ENCODE measurements at regions of chr1 and their contacts with region 1.

Region 1: GRCh38 chr1:206734499-206735142 is 36.0 kb upstream of the IL19 start:
- DNase-seq: peak; percentile 73
- CTCF ChIP-seq: peak; percentile 77

Region 2: DNA sequence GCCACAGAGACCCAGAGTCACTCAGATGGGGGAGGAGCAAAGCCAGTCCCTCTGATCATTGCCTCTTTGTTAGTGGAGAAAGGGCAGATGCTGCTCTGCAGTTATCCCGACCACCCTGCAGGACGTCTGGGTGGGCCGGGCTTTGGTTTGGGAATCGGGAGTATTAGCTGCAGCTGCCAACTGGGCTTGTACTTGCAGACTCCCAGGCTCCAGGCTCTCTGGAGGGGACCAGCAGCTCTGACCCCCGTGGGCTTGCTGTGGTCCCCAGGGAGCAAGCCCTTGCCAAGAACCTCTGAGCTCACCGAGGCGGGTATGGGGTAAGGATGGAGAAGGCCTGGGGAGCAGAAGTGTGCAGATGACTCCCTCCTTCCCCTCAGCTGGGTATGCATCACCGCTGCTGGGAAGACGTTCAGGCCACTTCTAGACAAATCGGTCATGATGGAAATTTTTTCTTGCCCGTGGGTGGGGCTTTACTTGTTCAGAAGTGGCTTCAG is 28.3 kb before region 1 on chr1:
- CTCF ChIA-PET with region 1: interaction called, 10 read pairs
- POLR2A ChIA-PET with region 1: no interaction called
- DNase-seq: no peak
- CTCF ChIP-seq: no peak

Region 3: DNA sequence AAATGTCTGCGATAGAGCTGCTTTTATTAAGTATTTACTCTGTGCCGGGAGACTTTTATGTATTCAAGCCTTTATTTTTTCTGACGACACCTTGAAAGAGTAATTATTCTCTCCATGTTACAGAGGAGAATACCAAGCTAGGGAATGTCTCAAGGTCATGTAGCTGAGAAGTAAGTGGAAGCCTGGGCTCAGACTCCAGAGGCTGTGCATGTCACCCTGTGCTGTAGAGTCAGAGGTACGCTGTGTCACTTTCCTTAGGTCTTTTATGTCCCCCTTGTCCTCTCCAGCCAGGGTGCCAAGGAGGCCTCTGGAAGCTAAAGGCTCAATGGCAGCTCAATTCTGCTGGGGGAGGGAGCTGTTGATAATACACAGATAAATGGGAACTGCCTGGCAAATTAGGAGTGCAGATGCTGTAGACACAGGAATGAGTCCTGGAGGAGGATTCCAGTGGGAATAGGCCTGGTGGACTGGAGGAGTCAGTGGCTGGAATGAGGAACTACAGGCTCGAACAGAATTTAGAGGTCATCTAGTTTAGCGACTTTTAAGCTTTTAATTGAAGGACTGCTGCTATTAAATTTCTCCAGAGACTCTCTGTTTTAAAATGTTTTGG is 26.6 kb after region 1 on chr1:
- CTCF ChIA-PET with region 1: interaction called, 32 read pairs
- POLR2A ChIA-PET with region 1: interaction called, 5 read pairs
- DNase-seq: no peak
- CTCF ChIP-seq: no peak

Region 4: DNA sequence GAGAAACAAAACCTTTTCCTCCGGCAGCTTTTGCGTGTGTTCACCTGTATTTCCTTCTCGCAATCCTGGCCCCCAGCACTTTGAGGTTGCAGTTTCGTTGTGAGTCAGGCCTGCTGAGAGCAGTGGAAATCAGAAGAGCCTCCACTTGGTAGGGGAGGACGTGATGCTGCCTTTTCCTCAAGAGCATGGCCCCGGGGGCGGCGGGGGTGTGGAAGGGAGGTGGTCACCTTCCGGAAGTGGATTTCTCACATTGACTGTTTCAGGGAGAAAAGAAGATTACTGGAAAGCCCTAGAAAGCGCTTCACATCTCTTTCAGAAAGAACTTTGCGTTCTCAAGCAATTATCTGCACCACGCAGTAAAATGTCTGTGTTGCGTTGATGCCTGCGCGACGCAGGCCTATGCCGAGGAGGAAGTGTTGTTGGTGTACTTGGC is 49.9 kb after region 1 on chr1:
- CTCF ChIA-PET with region 1: interaction called, 17 read pairs
- POLR2A ChIA-PET with region 1: no interaction called
- DNase-seq: peak; percentile 76
- CTCF ChIP-seq: no peak

Region 5: DNA sequence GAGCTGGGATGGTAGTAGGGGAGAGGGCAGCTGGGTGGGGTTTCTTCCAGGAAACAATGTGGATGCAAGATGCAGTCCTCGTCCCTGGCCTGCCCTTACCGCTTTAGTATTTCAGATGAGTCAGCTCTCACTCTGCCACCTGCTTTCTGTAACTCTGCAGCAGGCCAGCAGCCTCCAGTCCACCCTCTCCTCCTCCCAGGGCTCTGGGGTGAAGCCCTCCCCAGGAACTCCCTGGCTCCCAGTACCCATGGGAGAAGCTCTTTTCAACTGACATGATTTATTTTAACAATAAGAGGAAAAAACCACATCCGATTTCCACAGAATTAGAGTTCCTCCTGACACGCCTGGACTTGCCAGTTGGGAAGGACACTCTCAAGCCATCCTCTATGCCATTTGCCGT is 91.8 kb after region 1 on chr1:
- CTCF ChIA-PET with region 1: interaction called, 11 read pairs
- POLR2A ChIA-PET with region 1: no interaction called
- DNase-seq: no peak
- CTCF ChIP-seq: no peak

Region 6: GRCh38 chr1:206925106-206925736 is 190.6 kb after region 1 on chr1:
- CTCF ChIA-PET with region 1: interaction called, 20 read pairs
- POLR2A ChIA-PET with region 1: no interaction called
- DNase-seq: peak; percentile 81
- CTCF ChIP-seq: peak; percentile 69

Measured in GM10248 (cell line).